Prostate gland (tissue), 2 donors: ENCODE measurements at regions of chr18 and their contacts with region 1.

Region 1: GRCh38 chr18:47175908-47176575 is at the start of gene IER3IP1:
- DNase-seq: peak; percentile 87
- H3K4me3 ChIP-seq: peak within 1 kb of the TSS; percentile 60 to 74
- H3K27ac ChIP-seq: peak within 1 kb of the TSS; percentile 63 to 67
- H3K4me1 ChIP-seq: no peaks in the 10 kb centered on the region
- H3K27me3 ChIP-seq: no peaks in the 10 kb centered on the region
- CTCF ChIP-seq: peak in 2 of 4 experiments; percentile 32 to 44
- POLR2A ChIP-seq: peak; percentile 71
- total RNA-seq, gene IER3IP1: 8.4 to 15.8 TPM

Region 2: GRCh38 chr18:47120428-47120827 is 55.6 kb before region 1 on chr18:
- intact Hi-C with region 1: no loop called
- DNase-seq: no peak
- H3K4me3 ChIP-seq: no peak overlapping the region
- H3K27ac ChIP-seq: no peak overlapping the region
- H3K4me1 ChIP-seq: no peaks in the 10 kb centered on the region
- H3K27me3 ChIP-seq: no peaks in the 10 kb centered on the region
- CTCF ChIP-seq: no peak
- POLR2A ChIP-seq: no peak

Region 3: GRCh38 chr18:47150029-47150823 is 25.8 kb before region 1 on chr18 and contains the start of gene HDHD2:
- intact Hi-C with region 1: loop called (anchors 2 kb)
- DNase-seq: peak; percentile 65
- H3K4me3 ChIP-seq: peak within 1 kb of the TSS; percentile 67 to 77
- H3K27ac ChIP-seq: peak within 1 kb of the TSS; percentile 86 to 88
- H3K4me1 ChIP-seq: peaks cover 3% of the 10 kb centered on the region
- H3K27me3 ChIP-seq: no peaks in the 10 kb centered on the region
- CTCF ChIP-seq: no peak
- POLR2A ChIP-seq: peak; percentile 50
- total RNA-seq, gene HDHD2: 37.3 to 56.3 TPM